ENCODE measurements at regions of chr1 and their contacts with region 1.

Region 1: GRCh38 chr1:207868774-207869721 is 41.9 kb downstream of the CD34 start:
- DNase-seq: peak; percentile 83
- H3K4me3 ChIP-seq: peak overlapping the region; percentile 64 to 67 (median 65)
- H3K27ac ChIP-seq: peak overlapping the region; percentile 52
- H3K4me1 ChIP-seq: peaks cover 17% of the 10 kb centered on the region
- H3K27me3 ChIP-seq: no peaks in the 10 kb centered on the region
- CTCF ChIP-seq: peak; percentile 73 to 95
- POLR2A ChIP-seq: peak; percentile 59

Region 2: DNA sequence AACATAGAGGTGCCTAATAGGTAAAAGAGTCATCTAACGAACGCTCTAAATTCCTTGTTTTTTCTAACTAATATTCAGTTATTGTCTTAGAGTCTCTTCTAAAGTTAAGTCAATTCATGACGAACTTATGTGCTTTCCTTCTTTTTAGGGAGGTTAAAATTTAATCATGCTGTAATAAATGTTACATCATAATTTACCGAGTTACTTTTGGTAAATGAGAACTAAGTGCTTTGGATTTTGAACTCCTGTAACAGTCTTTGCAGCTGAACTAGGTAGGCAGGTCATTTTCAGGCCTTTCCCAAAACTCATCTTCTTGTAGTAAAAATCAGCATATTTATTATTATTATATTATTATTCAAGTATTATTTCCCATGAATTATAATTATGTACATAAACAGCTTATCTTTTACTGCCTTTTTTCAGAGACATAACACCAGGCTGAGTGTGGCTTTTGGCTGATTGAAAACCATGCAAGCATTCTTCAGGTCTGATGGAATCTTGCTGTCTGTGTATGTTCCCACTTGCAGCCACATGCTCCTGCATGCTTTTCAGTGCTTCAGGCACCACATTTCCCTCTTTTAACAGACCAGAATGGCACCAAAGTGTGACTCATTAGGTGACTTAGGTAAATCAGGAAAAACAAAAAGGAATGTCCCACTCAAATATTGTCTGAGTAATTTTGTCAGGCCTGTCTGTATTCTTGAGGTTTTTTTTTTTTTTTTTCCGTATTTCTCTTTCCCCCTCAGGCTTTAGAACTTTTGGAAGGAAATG is 628.5 kb before region 1 on chr1:
- CTCF ChIA-PET with region 1: no interaction called
- POLR2A ChIA-PET with region 1: no interaction called
- dilution Hi-C with region 1: no loop called
- intact Hi-C with region 1: no loop called
- DNase-seq: peak; percentile 59
- H3K4me3 ChIP-seq: no peak overlapping the region
- H3K27ac ChIP-seq: no peak overlapping the region
- H3K4me1 ChIP-seq: peaks cover 18% of the 10 kb centered on the region
- H3K27me3 ChIP-seq: no peaks in the 10 kb centered on the region
- CTCF ChIP-seq: no peak
- POLR2A ChIP-seq: no peak

Region 3: GRCh38 chr1:207811920-207812720 is 56.9 kb before region 1 on chr1:
- CTCF ChIA-PET with region 1: interaction called, 35 read pairs
- POLR2A ChIA-PET with region 1: no interaction called
- dilution Hi-C with region 1: no loop called
- intact Hi-C with region 1: no loop called
- DNase-seq: peak; percentile 55
- H3K4me3 ChIP-seq: no peak overlapping the region
- H3K27ac ChIP-seq: no peak overlapping the region
- H3K4me1 ChIP-seq: peaks cover 20% of the 10 kb centered on the region
- H3K27me3 ChIP-seq: no peaks in the 10 kb centered on the region
- CTCF ChIP-seq: peak; percentile 41 to 66
- POLR2A ChIP-seq: no peak

Region 4: DNA sequence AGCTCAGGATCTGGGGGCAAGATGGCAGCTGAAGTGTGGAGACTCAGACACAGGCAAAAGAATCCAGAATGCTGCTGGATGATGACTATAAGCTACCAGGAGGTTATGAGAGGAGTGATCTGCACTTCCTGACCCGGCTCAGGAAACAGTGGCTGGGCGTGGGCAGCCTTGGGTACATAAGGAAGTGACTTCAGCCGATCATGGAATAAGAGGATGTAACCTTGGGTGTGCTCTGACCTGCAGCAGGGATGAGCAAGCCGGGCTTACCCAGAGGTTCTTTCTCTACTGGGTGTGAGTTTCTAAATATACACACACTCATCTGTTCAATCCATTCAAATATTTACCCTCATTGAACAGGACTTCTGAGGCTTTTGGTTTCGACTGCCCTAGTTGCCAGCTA is 20.8 kb before region 1 on chr1:
- CTCF ChIA-PET with region 1: interaction called, 634 read pairs
- POLR2A ChIA-PET with region 1: interaction called, 3 read pairs
- dilution Hi-C with region 1: no loop called
- intact Hi-C with region 1: loop called (anchors 1 kb)
- DNase-seq: peak; percentile 90
- H3K4me3 ChIP-seq: peak overlapping the region in 1 of 3 experiments; percentile 6
- H3K27ac ChIP-seq: peak overlapping the region; percentile 90
- H3K4me1 ChIP-seq: peaks cover 40% of the 10 kb centered on the region
- H3K27me3 ChIP-seq: no peaks in the 10 kb centered on the region
- CTCF ChIP-seq: no peak
- POLR2A ChIP-seq: peak; percentile 78

Region 5: GRCh38 chr1:207853372-207853757 is 15.7 kb before region 1 on chr1:
- CTCF ChIA-PET with region 1: interaction called, 29 read pairs
- POLR2A ChIA-PET with region 1: interaction called, 10 read pairs
- dilution Hi-C with region 1: no loop called
- intact Hi-C with region 1: loop called (anchors 1 kb)
- DNase-seq: peak; percentile 42
- H3K4me3 ChIP-seq: no peak overlapping the region
- H3K27ac ChIP-seq: peak overlapping the region; percentile 19
- H3K4me1 ChIP-seq: peaks cover 33% of the 10 kb centered on the region
- H3K27me3 ChIP-seq: no peaks in the 10 kb centered on the region
- CTCF ChIP-seq: no peak
- POLR2A ChIP-seq: peak; percentile 48

Region 6: DNA sequence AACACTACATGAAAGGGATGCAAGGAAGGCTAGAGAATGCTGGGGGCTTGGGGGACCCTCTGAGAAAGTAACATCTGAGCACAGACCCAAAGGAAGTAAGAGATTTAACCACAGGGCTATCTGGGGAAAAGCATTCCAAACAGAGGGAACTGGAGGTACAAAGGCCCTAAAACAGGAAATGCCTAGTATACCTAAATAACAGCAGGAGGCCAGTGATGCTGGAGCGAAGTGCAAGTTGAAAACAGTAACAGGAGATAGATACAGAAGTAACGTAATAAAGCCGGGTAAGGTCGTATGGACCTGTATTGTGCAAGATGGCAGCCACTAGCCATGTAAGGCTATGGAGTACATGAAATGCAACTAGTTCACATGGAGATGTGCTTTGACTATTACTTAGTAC is 10.2 kb before region 1 on chr1:
- CTCF ChIA-PET with region 1: interaction called, 29 read pairs
- POLR2A ChIA-PET with region 1: interaction called, 10 read pairs
- dilution Hi-C with region 1: no loop called
- intact Hi-C with region 1: no loop called
- DNase-seq: peak; percentile 27
- H3K4me3 ChIP-seq: no peak overlapping the region
- H3K27ac ChIP-seq: no peak overlapping the region
- H3K4me1 ChIP-seq: peaks cover 20% of the 10 kb centered on the region
- H3K27me3 ChIP-seq: no peaks in the 10 kb centered on the region
- CTCF ChIP-seq: no peak
- POLR2A ChIP-seq: no peak

Region 7: DNA sequence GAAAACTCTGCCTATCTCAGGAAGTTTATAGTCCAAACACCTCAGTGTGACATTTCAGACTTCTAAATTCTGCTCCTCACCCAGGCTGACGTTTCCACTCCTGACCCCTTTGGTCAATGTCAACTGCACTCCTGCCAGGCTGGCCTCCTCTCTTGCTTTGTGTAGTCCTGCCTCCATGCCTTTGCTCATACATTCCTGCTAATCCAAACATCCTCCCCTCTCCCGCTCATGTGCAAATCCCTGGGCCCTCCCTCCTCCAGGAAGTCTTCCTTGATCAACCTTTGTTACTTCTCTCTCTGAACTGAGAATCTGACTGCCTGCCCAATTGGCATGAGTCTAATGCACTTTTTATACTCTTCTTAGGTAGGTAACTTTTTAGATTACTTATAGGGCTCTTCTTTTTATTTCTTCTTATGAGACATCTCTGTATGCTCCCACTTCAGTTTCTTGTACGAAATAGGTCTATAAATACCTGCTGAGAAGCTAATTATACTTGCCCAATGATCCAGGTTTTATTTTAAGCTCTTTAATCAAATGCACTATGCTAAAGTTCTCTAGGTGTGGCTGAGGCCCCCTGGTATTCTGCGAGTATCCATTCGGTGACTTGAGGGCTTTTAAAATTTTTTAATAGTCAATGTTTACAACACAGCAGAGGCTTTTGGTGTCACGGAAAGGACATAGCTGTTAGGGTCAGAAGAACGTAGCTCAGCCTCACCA is 247.0 kb after region 1 on chr1:
- CTCF ChIA-PET with region 1: no interaction called
- POLR2A ChIA-PET with region 1: no interaction called
- dilution Hi-C with region 1: no loop called
- intact Hi-C with region 1: no loop called
- DNase-seq: no peak
- H3K4me3 ChIP-seq: no peak overlapping the region
- H3K27ac ChIP-seq: no peak overlapping the region
- H3K4me1 ChIP-seq: peaks cover 12% of the 10 kb centered on the region
- H3K27me3 ChIP-seq: no peaks in the 10 kb centered on the region
- CTCF ChIP-seq: no peak
- POLR2A ChIP-seq: no peak

Region 8: GRCh38 chr1:208309779-208310178 is 440.7 kb after region 1 on chr1:
- CTCF ChIA-PET with region 1: no interaction called
- POLR2A ChIA-PET with region 1: no interaction called
- dilution Hi-C with region 1: no loop called
- intact Hi-C with region 1: no loop called
- DNase-seq: no peak
- H3K4me3 ChIP-seq: no peak overlapping the region
- H3K27ac ChIP-seq: no peak overlapping the region
- H3K4me1 ChIP-seq: no peaks in the 10 kb centered on the region
- H3K27me3 ChIP-seq: no peaks in the 10 kb centered on the region
- CTCF ChIP-seq: no peak
- POLR2A ChIP-seq: no peak

Region 9: GRCh38 chr1:208772891-208773290 is 903.8 kb after region 1 on chr1:
- CTCF ChIA-PET with region 1: no interaction called
- POLR2A ChIA-PET with region 1: no interaction called
- dilution Hi-C with region 1: no loop called
- intact Hi-C with region 1: no loop called
- DNase-seq: no peak
- H3K4me3 ChIP-seq: no peak overlapping the region
- H3K27ac ChIP-seq: no peak overlapping the region
- H3K4me1 ChIP-seq: no peaks in the 10 kb centered on the region
- H3K27me3 ChIP-seq: no peaks in the 10 kb centered on the region
- CTCF ChIP-seq: no peak
- POLR2A ChIP-seq: no peak

Measured in endothelial cell of umbilical vein (primary cell).